ENCODE measurements at regions of chr20 and their contacts with region 1.

Region 1: DNA sequence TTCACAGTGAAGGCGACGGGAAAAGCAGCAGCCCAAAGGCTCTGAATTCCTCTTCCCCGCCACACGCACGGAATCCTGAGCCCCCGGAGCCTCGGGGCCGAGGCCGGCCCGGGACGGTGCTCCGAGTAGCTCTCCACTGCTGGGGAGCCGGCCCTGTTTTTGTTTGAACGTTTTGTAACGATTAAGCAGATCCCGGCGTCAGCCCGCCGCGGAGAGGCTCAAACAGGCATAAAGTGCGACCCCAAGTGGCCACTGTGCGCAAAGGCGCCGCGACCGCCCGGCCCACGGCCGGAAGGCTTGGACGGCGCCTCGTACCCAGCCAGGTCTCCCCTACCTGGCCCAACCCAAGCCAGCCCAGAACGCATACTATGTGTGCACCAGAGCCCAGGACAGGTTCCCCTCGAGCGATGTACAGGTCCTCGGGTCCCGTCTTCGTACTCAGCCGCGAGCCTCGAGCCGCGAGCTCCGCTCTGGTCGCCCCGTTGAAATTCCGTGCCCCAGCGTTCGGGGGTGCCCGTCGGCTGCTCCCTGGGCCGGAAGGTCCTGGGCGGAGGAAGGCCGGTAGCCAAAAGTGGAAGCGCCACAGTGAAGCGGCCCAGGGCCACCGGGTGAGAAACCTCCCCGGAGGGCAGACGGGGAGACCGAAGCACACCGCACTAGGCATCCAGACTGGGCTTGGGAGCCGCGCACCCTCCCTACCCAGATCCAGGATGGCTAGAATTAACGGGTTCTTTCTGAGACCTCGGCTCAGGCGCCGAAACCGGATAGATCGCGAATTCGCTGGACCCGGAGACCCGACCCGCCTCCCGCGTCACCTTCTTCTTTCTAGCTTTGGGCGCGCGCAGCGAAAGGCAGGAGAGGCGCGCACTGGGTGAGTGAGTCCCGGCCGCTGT is 1.2 kb upstream of the MAFB start:
- DNase-seq: peak; percentile 95
- H3K4me3 ChIP-seq: peak overlapping the region; percentile 30 to 72 (median 55)
- H3K27ac ChIP-seq: peak overlapping the region; percentile 92 to 94 (median 93)
- H3K4me1 ChIP-seq: peaks cover 0 to 52% (median 36%) of the 10 kb centered on the region in 4 donors
- H3K27me3 ChIP-seq: peaks cover 25 to 50% (median 50%) of the 10 kb centered on the region in 3 donors
- CTCF ChIP-seq: peak; percentile 71 to 91 (median 80)
- EP300 ChIP-seq: no peak
- POLR2A ChIP-seq: peak in 1 of 2 donors; percentile 41

Region 2: DNA sequence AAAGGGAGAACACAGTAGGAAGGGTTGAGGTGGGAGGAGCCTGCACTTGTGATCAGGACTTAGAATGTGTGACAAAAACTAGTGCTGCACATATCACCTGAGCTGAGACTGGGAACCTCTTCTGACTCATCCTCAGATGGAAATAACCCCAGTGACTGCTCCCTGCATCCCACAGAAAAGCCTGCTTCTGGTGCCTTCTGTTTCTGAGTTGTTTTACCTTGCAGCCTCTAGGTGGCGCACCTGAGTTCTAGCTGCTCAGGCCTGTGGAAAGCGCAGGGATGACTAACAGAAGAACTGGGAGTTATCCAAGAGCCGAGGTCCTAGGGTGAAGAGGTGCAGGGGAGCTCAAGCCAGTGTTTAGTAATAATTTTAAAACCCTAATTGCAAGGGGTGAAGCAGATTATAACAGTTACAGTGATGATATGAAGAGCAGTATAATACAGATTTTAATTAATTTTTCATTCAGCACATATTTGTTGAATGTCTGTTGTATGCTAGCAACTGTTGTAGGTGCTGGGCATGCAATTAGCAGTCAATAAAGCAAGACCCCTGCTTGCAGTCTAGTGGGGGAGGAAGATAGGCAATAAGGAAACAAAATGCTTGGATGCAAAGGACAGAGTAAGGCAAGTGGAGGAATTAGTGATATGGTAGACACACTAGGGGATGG is 1425.5 kb before region 1 on chr20:
- intact Hi-C with region 1: loop called (anchors 5 kb)
- DNase-seq: peak; percentile 82
- H3K4me3 ChIP-seq: no peak overlapping the region
- H3K27ac ChIP-seq: no peak overlapping the region
- H3K4me1 ChIP-seq: peaks cover 0 to 9% (median 4%) of the 10 kb centered on the region in 4 donors
- H3K27me3 ChIP-seq: no peaks in the 10 kb centered on the region
- CTCF ChIP-seq: peak; percentile 32 to 82 (median 62)
- EP300 ChIP-seq: no peak
- POLR2A ChIP-seq: no peak

Region 3: GRCh38 chr20:39885975-39886649 is 804.1 kb before region 1 on chr20:
- intact Hi-C with region 1: loop called (anchors 2 kb)
- DNase-seq: peak; percentile 82
- H3K4me3 ChIP-seq: no peak overlapping the region
- H3K27ac ChIP-seq: peak overlapping the region in 1 of 4 donors; percentile 16
- H3K4me1 ChIP-seq: no peaks in the 10 kb centered on the region
- H3K27me3 ChIP-seq: no peaks in the 10 kb centered on the region
- CTCF ChIP-seq: peak in 3 of 4 experiments; percentile 42 to 57 (median 51)
- EP300 ChIP-seq: no peak
- POLR2A ChIP-seq: no peak

Region 4: GRCh38 chr20:40160097-40160550 is 530.1 kb before region 1 on chr20:
- intact Hi-C with region 1: loop called (anchors 5 kb)
- DNase-seq: peak; percentile 67
- H3K4me3 ChIP-seq: no peak overlapping the region
- H3K27ac ChIP-seq: no peak overlapping the region
- H3K4me1 ChIP-seq: no peaks in the 10 kb centered on the region
- H3K27me3 ChIP-seq: no peaks in the 10 kb centered on the region
- CTCF ChIP-seq: peak in 3 of 4 experiments; percentile 25 to 71 (median 49)
- EP300 ChIP-seq: no peak
- POLR2A ChIP-seq: no peak

Region 5: GRCh38 chr20:40286975-40287531 is 403.1 kb before region 1 on chr20:
- intact Hi-C with region 1: loop called (anchors 5 kb)
- DNase-seq: peak; percentile 89
- H3K4me3 ChIP-seq: no peak overlapping the region
- H3K27ac ChIP-seq: peak overlapping the region in 3 of 4 donors; percentile 61 to 77 (median 67)
- H3K4me1 ChIP-seq: peaks cover 0 to 25% (median 19%) of the 10 kb centered on the region in 4 donors
- H3K27me3 ChIP-seq: no peaks in the 10 kb centered on the region
- CTCF ChIP-seq: no peak
- EP300 ChIP-seq: no peak
- POLR2A ChIP-seq: no peak

Region 6: GRCh38 chr20:41357424-41358163 is 667.4 kb after region 1 on chr20:
- intact Hi-C with region 1: no loop called
- DNase-seq: no peak
- H3K4me3 ChIP-seq: no peak overlapping the region
- H3K27ac ChIP-seq: no peak overlapping the region
- H3K4me1 ChIP-seq: no peaks in the 10 kb centered on the region
- H3K27me3 ChIP-seq: no peaks in the 10 kb centered on the region
- CTCF ChIP-seq: no peak
- EP300 ChIP-seq: no peak
- POLR2A ChIP-seq: no peak

Measured in sigmoid colon (tissue), 7 donors.